Calu3 (cell line): ENCODE measurements at regions of chr22 and their contacts with region 1.

Region 1: GRCh38 chr22:17830043-17830961 is 56.0 kb upstream of the BID start:
- DNase-seq: peak; percentile 91
- H3K4me3 Mint-ChIP-seq: no peak overlapping the region
- H3K27ac Mint-ChIP-seq: no peak overlapping the region
- H3K4me1 Mint-ChIP-seq: no peaks in the 10 kb centered on the region
- H3K27me3 Mint-ChIP-seq: no peaks in the 10 kb centered on the region
- CTCF ChIP-seq: peak; percentile 98

Region 2: DNA sequence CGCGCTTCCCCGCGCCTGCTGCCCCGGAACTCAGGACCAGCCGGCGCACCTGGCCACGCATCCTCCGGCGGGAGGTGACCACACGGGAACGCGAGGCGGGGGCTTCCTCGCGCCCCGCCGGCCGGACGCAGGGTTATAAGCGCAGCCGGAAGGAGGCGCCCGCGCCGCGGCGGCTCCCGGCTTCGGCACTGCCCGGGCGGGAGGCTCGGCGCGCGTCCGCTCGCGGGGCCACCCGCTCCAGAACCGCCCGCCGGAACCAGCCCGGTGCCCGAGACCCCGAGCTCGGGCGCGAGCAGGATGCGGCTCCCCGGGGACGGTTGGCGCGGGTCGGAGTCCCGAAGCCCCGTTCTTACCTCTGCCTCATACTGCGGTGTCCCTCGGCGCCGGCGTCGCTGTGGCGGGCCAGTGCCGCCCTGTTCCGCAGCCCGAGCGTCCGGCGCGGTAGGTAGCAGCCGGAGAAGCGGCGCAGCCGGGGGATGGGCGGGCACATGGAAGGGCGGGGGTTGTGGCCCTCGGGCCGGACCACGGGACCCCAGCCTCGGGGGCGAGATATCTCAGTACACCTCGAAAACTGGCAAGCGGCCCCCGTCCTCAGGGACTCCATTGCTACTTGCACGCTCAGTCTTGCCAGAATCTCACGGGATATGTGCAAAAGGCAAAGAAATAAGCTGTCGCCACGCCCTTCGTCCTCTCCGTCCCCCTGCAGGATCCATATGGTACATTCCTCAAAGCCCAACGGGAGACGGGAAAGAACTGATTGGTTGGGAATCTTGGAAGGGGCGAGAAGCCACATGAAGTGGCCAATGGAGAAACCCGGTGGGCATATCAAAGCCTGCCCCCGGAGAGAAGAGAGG is 171.0 kb after region 1 on chr22:
- CTCF ChIA-PET with region 1: no interaction called
- intact Hi-C with region 1: loop called (anchors 10 kb)
- DNase-seq: peak; percentile 91
- H3K4me3 Mint-ChIP-seq: peak overlapping the region; percentile 70
- H3K27ac Mint-ChIP-seq: peak overlapping the region; percentile 91
- H3K4me1 Mint-ChIP-seq: peaks cover 36% of the 10 kb centered on the region
- H3K27me3 Mint-ChIP-seq: no peaks in the 10 kb centered on the region
- CTCF ChIP-seq: peak; percentile 47